ENCODE measurements at regions of chr3 and their contacts with region 1.

Region 1: DNA sequence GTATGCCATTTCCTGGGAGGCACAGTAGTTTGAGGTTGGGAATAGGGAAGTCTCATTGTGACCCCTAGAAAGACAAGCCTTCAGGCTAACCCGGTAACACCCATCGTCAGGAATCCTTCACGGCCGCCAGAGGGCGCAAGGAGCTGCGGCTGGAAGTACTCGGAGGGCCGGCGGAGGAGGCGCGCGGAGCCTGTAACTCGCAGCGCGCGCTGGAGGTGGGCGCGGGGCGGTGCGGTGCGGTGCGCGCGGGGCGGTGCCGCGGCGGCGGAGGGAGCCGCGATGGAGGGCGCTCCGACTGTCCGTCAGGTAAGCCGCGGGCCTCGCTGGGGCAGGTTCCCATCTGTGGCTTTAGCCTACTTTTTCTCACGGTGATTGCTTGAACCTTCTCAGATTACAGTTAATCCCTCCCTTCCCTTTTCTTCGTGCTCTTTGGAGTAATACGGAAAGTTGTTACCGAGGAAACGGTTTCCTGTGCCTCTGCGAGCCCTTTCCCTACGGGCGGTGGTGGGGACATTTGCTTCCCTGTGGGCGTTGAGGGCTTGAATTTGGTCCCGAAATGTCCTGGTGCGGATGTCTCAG is at the start of gene GRAMD1C:
- DNase-seq: peak; percentile 82 to 95
- ATAC-seq: peak; percentile 98 to 100 (median 99)
- H3K4me3 ChIP-seq: peak within 1 kb of the TSS; percentile 50
- H3K4me3 Mint-ChIP-seq: peak within 1 kb of the TSS; percentile 87
- H3K27ac ChIP-seq: peak within 1 kb of the TSS; percentile 15
- H3K27ac Mint-ChIP-seq: peak within 1 kb of the TSS in 1 of 2 donors; percentile 74
- H3K4me1 ChIP-seq: peaks cover 10% of the 10 kb centered on the region
- H3K4me1 Mint-ChIP-seq: peaks cover 7 to 8% of the 10 kb centered on the region in 2 donors
- H3K27me3 ChIP-seq: no peaks in the 10 kb centered on the region
- H3K27me3 Mint-ChIP-seq: peaks cover 0 to 2% of the 10 kb centered on the region in 2 donors
- CTCF ChIP-seq: peak; percentile 86
- total RNA-seq, gene GRAMD1C: 2.7 to 3.9 (median 3.6) TPM

Region 2: GRCh38 chr3:113912552-113913236 is 74.0 kb after region 1 on chr3:
- intact Hi-C with region 1: loop called (anchors 1 kb)
- DNase-seq: peak in 1 of 2 donors; percentile 73
- ATAC-seq: peak; percentile 86 to 91 (median 88)
- H3K4me3 ChIP-seq: no peak overlapping the region
- H3K4me3 Mint-ChIP-seq: peak overlapping the region; percentile 51
- H3K27ac ChIP-seq: peak overlapping the region; percentile 8
- H3K27ac Mint-ChIP-seq: peak overlapping the region; percentile 61 to 69
- H3K4me1 ChIP-seq: no peaks in the 10 kb centered on the region
- H3K4me1 Mint-ChIP-seq: peaks cover 8 to 9% of the 10 kb centered on the region in 2 donors
- H3K27me3 ChIP-seq: no peaks in the 10 kb centered on the region
- H3K27me3 Mint-ChIP-seq: no peaks in the 10 kb centered on the region
- CTCF ChIP-seq: peak; percentile 45